ENCODE measurements at regions of chr12 and their contacts with region 1.

Region 1: DNA sequence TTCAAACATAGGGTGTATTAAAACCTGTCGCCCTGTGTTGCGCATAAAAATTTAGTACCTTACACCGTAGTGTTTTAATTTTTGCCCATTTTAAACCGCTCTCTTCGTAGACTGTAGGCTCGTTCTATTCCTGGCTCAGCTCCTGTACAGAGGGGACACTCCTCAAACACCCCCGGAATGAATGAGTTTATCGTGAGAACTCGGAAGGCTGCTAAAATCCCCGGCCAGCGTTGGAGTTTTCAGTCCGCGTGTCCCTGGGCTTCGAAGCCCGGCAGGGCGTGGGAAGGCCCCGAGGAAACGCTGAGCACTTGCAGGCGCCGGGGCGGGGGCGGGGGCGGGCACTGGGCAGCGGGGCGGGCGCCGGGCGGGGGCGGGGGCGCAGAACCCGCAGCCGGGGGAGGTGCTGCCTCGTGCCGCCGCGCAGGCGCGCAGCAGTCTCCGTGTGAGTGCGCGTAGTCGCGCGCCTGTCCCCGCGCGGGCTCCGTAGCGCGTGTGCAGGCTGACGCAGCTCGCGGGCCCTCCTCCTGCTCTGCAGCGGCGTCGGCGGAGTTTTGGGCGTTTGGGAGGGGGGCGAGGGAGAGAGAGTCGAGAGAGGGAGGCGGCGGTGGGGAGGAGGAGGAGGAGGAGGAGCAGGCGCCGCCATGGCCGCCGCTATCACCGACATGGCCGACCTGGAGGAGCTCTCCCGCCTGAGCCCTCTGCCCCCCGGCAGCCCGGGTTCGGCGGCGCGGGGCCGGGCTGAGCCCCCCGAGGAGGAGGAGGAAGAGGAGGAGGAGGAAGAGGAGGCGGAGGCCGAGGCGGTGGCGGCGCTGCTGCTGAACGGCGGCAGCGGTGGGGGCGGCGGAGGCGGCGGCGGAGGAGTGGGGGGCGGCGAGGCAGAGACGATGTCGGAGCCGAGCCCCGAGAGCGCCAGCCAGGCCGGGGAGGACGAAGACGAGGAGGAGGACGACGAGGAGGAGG is at the start of gene AEBP2:
- DNase-seq: peak; percentile 69 to 82
- H3K4me3 ChIP-seq: peak within 1 kb of the TSS; percentile 74 to 98 (median 92)
- H3K27ac ChIP-seq: peak within 1 kb of the TSS; percentile 85
- H3K4me1 ChIP-seq: peaks cover 2 to 15% (median 14%) of the 10 kb centered on the region in 4 experiments; a peak in 5 of 7 replicates
- H3K27me3 ChIP-seq: no peaks in the 10 kb centered on the region
- CTCF ChIP-seq: no peak
- EP300 ChIP-seq: no peak
- POLR2A ChIP-seq: peak; percentile 60 to 78; a peak in 2 of 3 replicates
- RAD21 ChIP-seq: no peak
- total RNA-seq, gene AEBP2: 56.9 and 61.4 TPM in 2 replicates

Region 2: DNA sequence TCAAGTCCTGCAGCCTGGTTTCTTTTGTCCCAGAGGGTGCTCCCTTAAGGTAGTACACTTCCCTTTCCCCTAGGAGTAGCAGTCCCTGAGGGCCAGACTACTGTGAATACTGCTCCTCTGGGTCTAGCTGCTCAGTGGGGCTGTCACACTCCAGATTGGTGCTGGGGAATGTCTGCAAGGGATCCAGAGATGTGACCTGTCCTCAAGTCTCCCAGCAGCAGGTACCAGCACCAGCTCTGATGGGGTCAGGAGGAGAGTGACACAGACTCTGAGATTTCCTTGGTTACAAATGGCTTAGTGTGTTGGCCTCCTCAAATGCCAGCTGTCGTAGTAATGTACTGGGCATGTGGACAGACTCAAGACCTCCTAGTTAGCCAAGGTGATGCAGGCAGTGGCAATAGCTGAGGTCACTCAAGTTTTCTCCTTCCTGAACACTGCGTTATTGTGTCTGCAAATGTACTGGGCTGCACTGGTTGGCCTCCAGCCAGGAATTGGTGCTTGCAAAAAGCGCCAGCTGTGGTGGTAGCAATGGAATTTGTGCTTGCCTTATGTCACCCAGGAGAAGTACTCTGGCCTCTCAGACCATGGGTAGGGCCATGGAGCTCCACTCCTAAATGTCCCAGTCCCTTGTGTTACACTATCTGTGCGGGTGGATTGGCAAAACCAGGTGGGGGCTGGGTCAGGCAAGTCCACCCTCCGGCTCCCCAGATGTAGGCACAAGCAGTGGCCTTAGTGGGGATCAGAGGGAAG is 36.4 kb before region 1 on chr12:
- CTCF ChIA-PET with region 1: interaction called, 3 read pairs
- POLR2A ChIA-PET with region 1: interaction called, 11 read pairs
- DNase-seq: no peak
- H3K4me3 ChIP-seq: no peak overlapping the region
- H3K27ac ChIP-seq: no peak overlapping the region
- H3K4me1 ChIP-seq: peaks cover 0 to 4% (median 0%) of the 10 kb centered on the region in 4 experiments; a peak in 2 of 7 replicates
- H3K27me3 ChIP-seq: no peaks in the 10 kb centered on the region
- CTCF ChIP-seq: no peak
- EP300 ChIP-seq: no peak
- POLR2A ChIP-seq: no peak
- RAD21 ChIP-seq: no peak

Region 3: GRCh38 chr12:19477071-19477470 is 37.7 kb after region 1 on chr12:
- CTCF ChIA-PET with region 1: no interaction called
- POLR2A ChIA-PET with region 1: no interaction called
- DNase-seq: no peak
- H3K4me3 ChIP-seq: no peak overlapping the region
- H3K27ac ChIP-seq: no peak overlapping the region
- H3K4me1 ChIP-seq: peaks cover 0 to 4% (median under 1%) of the 10 kb centered on the region in 4 experiments; a peak in 3 of 7 replicates
- H3K27me3 ChIP-seq: no peaks in the 10 kb centered on the region
- CTCF ChIP-seq: no peak
- EP300 ChIP-seq: no peak
- POLR2A ChIP-seq: no peak
- RAD21 ChIP-seq: no peak

Region 4: DNA sequence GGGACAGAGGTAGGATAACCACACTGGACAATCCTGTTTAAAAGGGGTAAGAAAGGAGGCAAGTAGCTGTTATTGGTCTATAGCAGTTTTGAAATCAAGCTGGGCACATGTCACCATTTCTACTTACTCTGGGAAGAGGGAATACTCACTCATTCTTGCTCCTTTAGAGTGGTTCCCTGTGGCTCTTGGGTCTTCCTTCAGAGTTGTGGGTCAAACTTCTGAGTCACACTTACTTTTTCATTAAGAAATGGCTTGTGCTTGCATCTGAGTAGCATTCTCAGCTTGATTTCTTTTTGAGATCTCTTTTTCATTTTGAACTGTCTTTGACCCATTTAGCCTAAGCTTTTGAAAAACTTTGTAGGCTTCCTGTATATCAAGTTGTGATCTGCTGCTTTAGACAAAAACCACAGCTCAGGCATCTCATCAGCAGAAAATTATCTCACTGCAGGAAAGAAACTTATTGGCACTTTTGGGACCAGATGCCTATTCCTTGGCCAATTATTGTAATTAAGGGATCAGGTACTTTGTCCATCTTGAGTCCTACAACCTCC is 122.1 kb after region 1 on chr12:
- CTCF ChIA-PET with region 1: no interaction called
- POLR2A ChIA-PET with region 1: no interaction called
- DNase-seq: no peak
- H3K4me3 ChIP-seq: no peak overlapping the region
- H3K27ac ChIP-seq: no peak overlapping the region
- H3K4me1 ChIP-seq: 0 out of 7 replicates have a peak, but pooled peaks cover 0 to 3% (median 0%) of the 10 kb centered on the region in 4 experiments
- H3K27me3 ChIP-seq: no peaks in the 10 kb centered on the region
- CTCF ChIP-seq: no peak
- EP300 ChIP-seq: no peak
- POLR2A ChIP-seq: no peak
- RAD21 ChIP-seq: no peak